ENCODE measurements at regions of chr3 and their contacts with region 1.

Region 1: GRCh38 chr3:9986237-9986725 is 360 bp downstream of the EMC3 start:
- DNase-seq: no peak
- ATAC-seq: peak; percentile 28
- H3K4me3 ChIP-seq: peak overlapping the region; percentile 71 to 96 (median 82)
- H3K4me3 Mint-ChIP-seq: peak overlapping the region; percentile 98
- H3K27ac ChIP-seq: peak overlapping the region; percentile 88 to 97
- H3K27ac Mint-ChIP-seq: peak overlapping the region; percentile 100
- H3K4me1 ChIP-seq: peaks cover 16 to 22% of the 10 kb centered on the region in 2 donors
- H3K4me1 Mint-ChIP-seq: peaks cover 28% of the 10 kb centered on the region
- H3K27me3 ChIP-seq: no peaks in the 10 kb centered on the region
- H3K27me3 Mint-ChIP-seq: no peaks in the 10 kb centered on the region
- CTCF ChIP-seq: no peak

Region 2: DNA sequence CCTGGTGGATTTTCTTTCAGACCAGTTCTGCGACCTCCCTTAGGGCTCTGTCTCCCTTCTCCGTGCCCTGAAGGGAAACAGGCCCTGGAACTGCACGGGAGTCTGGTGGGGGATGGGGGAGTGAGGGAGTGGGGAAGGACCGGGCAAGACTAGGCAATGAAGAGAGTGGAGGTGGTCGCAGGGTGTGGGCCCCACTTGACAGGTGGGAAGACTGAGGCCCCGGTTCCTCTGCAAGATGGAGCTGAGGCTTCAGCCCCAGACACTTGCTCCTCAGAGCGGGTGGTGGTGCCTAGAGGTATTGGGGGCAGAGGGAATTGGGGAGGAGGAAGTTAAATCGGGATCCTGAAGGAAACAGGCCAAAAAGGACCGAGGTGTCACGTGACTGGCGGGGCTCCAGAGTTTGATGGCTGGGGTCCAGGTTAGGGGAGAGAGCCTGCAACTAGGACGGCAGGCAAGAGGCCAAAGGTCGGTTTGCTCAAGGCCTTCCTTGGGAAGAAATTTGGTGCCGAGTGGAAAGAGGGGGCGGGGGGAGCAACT is 215.9 kb before region 1 on chr3:
- CTCF ChIA-PET with region 1: no interaction called
- POLR2A ChIA-PET with region 1: no interaction called
- intact Hi-C with region 1: no loop called
- DNase-seq: no peak
- ATAC-seq: no peak
- H3K4me3 ChIP-seq: peak overlapping the region; percentile 38 to 63 (median 39)
- H3K4me3 Mint-ChIP-seq: peak overlapping the region; percentile 67
- H3K27ac ChIP-seq: no peak overlapping the region
- H3K27ac Mint-ChIP-seq: no peak overlapping the region
- H3K4me1 ChIP-seq: peaks cover 17 to 18% of the 10 kb centered on the region in 2 donors
- H3K4me1 Mint-ChIP-seq: peaks cover 21% of the 10 kb centered on the region
- H3K27me3 ChIP-seq: peaks cover 0 to 12% (median 2%) of the 10 kb centered on the region in 4 experiments
- H3K27me3 Mint-ChIP-seq: peaks cover 5% of the 10 kb centered on the region
- CTCF ChIP-seq: no peak

Region 3: DNA sequence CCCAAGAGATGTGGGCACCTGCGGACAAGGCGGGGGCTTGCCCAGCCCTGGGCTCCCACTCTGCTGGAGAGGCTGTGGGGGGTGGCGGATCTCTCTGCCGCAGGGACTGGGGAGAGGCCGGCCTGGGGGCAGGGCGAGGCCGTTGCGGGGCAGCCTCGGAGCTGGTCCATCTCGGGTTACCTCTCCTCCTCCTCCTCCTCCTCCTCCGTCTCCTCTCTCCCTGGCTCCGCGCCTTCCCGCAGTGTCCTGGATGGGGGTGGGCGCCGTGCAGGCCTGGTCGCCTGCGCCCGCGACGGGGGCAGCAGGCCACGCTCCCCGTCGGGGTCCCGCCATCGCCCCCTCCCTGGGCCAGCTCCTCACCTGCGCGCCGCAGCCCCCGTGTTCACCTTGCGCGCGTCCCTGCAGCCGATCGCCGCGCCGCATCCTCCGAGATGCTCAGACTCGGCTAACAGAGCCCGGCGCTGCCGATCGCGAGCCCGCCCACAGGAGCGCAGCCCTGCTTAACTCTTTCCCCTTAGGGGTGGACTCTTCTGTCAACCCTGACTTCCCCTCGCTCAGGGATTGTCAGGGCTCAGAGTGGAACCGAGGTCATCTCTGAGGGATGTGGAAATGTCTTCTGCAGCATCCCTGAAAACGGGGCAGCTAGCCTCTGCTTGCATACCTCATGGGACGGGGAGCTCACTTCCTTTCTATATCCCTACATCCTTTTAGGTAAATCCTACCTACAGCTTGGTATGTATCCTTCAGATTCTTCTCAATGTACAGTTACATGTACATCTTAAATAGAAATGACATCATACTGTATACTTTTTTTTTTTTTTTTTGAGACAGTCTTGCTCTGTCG is 34.1 kb before region 1 on chr3 and contains the start of gene PRRT3:
- CTCF ChIA-PET with region 1: no interaction called
- POLR2A ChIA-PET with region 1: no interaction called
- intact Hi-C with region 1: loop called (anchors 5 kb)
- DNase-seq: peak; percentile 62
- ATAC-seq: peak; percentile 89
- H3K4me3 ChIP-seq: peak within 1 kb of the TSS in 4 of 5 experiments; percentile 39 to 69 (median 58)
- H3K4me3 Mint-ChIP-seq: peak within 1 kb of the TSS; percentile 91
- H3K27ac ChIP-seq: no peak within 1 kb of the TSS
- H3K27ac Mint-ChIP-seq: peak within 1 kb of the TSS; percentile 50
- H3K4me1 ChIP-seq: peaks cover 15 to 18% of the 10 kb centered on the region in 2 donors
- H3K4me1 Mint-ChIP-seq: peaks cover 15% of the 10 kb centered on the region
- H3K27me3 ChIP-seq: peaks cover 0 to 12% (median 0%) of the 10 kb centered on the region in 4 experiments
- H3K27me3 Mint-ChIP-seq: no peaks in the 10 kb centered on the region
- CTCF ChIP-seq: no peak
- total RNA-seq, gene PRRT3: 3.9 and 4.4 TPM in 2 replicates

Region 4: DNA sequence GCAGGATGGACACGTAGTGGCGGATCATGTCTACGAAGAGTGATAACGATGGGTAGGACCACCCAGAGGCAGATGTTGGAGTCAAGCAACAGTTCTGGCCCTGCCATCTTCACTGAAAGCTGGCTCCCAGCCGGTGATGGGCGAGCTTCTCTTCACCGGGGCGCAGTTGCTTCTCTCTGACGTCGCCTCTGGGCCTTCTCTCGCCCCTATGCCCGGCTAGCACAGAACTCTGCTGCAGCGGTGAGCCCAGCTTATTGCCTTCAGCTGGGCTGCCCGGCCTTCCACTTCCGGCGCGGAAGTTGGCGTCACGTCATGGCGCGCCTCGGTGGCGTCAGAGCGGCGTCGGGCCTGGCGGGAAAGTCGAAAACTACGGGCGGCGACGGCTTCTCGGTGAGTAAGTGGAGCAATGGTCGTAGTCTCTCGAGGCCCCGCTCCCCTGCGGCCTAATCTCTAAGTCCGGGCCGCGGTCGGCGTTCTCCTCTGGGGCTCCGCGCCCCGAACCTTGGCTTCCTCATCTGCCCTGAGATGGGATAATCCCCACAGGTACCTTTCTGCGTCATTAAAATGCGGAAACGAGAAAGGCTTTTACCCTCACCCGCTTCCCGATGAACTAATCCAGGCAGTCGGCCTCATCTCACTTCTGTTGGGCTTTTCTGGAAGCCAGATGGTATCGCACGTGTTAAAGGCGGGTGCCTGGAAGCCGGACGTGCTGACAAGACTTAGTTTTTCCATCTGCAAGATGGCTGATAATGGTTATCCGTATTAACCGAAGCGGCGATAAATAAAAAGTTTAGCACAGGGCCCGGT is 40.0 kb after region 1 on chr3 and contains the start of gene FANCD2:
- CTCF ChIA-PET with region 1: no interaction called
- POLR2A ChIA-PET with region 1: interaction called, 3 read pairs
- intact Hi-C with region 1: loop called (anchors 1 kb)
- DNase-seq: peak; percentile 96
- ATAC-seq: peak; percentile 83
- H3K4me3 ChIP-seq: peak within 1 kb of the TSS; percentile 83 to 94 (median 91)
- H3K4me3 Mint-ChIP-seq: peak within 1 kb of the TSS; percentile 99
- H3K27ac ChIP-seq: peak within 1 kb of the TSS; percentile 94 to 96
- H3K27ac Mint-ChIP-seq: peak within 1 kb of the TSS; percentile 96
- H3K4me1 ChIP-seq: peaks cover 18 to 23% of the 10 kb centered on the region in 2 donors
- H3K4me1 Mint-ChIP-seq: peaks cover 34% of the 10 kb centered on the region
- H3K27me3 ChIP-seq: no peaks in the 10 kb centered on the region
- H3K27me3 Mint-ChIP-seq: no peaks in the 10 kb centered on the region
- CTCF ChIP-seq: no peak
- total RNA-seq, gene FANCD2: 31.7 and 35.5 TPM in 2 replicates

Region 5: DNA sequence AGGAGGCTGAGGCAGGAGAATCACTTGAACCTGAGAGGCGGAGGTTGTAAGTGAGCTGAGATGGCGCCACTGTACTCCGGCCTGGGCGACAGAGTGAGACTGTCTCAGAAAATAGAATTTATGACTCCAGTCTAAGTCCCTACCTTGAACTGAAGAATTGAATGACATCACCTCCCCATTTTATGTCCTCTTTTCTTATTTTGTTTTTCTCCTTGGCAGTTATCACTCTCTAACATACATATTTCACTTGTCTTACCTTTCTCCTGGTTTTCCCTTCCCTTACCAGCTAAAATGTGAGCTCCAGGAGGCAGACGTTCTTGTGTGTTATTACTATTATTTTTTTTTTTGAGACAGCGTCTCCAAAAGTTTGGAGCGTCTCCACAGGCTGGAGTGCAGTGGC is 269.6 kb after region 1 on chr3:
- CTCF ChIA-PET with region 1: no interaction called
- POLR2A ChIA-PET with region 1: no interaction called
- intact Hi-C with region 1: no loop called
- DNase-seq: no peak
- ATAC-seq: no peak
- H3K4me3 ChIP-seq: no peak overlapping the region
- H3K4me3 Mint-ChIP-seq: no peak overlapping the region
- H3K27ac ChIP-seq: no peak overlapping the region
- H3K27ac Mint-ChIP-seq: no peak overlapping the region
- H3K4me1 ChIP-seq: peaks cover 2 to 4% of the 10 kb centered on the region in 2 donors
- H3K4me1 Mint-ChIP-seq: peaks cover 43% of the 10 kb centered on the region
- H3K27me3 ChIP-seq: no peaks in the 10 kb centered on the region
- H3K27me3 Mint-ChIP-seq: no peaks in the 10 kb centered on the region
- CTCF ChIP-seq: no peak